Activated CD4-positive, alpha-beta T cell treated with anti-CD3 and anti-CD28 coated beads, Interleukin-2, amount 10 ng/mL, durations not matched to agents 24 days and 14 days (primary cell): ENCODE measurements at regions of chr14 and their contacts with region 1.

Region 1: DNA sequence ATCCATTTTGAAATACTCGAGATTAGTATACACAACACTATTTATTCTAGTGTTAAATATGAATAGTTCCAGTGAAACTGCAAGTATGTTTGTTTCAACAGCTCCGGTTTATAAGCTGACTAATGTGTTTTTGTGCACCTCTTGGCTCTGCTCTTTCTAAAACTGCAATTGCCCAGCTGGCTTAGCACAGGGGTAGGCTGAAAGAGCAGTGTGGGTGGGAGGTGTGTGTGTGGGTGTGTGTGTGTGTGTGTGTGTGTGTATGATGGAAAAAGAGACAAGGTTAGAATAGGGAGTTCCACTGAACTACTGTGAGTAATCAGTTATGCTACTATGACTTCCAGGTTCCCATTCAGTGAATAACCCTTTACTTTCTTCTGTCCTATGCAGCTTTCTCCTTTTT is 37.8 kb upstream of the DDHD1 start:
- DNase-seq: peak; percentile 67
- H3K4me3 Mint-ChIP-seq: peak overlapping the region; percentile 36
- H3K27ac Mint-ChIP-seq: peak overlapping the region; percentile 95
- H3K4me1 Mint-ChIP-seq: peaks cover 30% of the 10 kb centered on the region
- H3K27me3 Mint-ChIP-seq: peaks cover 4% of the 10 kb centered on the region

Region 2: DNA sequence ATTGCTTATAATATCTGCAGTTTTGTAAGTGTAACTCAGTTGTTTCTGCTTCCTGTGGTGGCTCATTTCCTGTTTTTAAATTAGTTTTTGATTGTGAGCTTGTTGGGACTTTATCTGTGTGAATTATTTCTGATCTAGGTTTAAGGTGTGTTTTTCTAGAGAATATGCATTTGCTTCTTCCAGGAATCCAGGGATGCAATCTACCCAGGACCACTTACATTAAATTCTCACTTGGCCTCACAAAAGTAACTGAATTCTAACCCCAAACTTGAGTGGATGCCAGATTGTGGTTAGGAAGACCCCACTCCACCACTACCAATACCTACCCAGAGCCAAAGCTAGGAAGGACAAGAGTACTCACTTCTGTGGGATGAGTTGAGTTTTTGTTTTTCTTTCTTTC is 449.1 kb before region 1 on chr14:
- intact Hi-C with region 1: no loop called
- DNase-seq: no peak
- H3K4me3 Mint-ChIP-seq: peak overlapping the region; percentile 75
- H3K27ac Mint-ChIP-seq: peak overlapping the region; percentile 91
- H3K4me1 Mint-ChIP-seq: peaks cover 31% of the 10 kb centered on the region
- H3K27me3 Mint-ChIP-seq: no peaks in the 10 kb centered on the region

Region 3: DNA sequence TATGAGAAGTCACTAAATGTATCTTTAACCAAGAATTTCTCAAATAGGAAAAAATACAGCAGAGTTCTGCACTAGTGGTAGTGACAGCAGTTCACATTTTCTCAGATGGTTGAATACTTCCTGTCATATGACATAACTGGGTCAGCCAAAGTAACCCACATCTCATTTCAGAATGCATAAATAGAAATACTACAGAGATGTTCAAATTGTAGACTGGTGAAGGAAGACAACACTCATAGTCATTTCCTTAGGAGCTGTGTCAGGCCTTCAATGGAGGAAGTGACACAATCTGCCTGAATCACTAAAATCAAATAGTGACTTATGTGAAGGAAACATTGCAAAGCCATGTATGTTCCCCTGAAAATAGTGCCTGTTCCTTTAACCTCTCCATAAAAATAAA is 272.5 kb before region 1 on chr14:
- intact Hi-C with region 1: loop called (anchors 2 kb)
- DNase-seq: peak; percentile 79
- H3K4me3 Mint-ChIP-seq: no peak overlapping the region
- H3K27ac Mint-ChIP-seq: no peak overlapping the region
- H3K4me1 Mint-ChIP-seq: peaks cover 12% of the 10 kb centered on the region
- H3K27me3 Mint-ChIP-seq: no peaks in the 10 kb centered on the region

Region 4: DNA sequence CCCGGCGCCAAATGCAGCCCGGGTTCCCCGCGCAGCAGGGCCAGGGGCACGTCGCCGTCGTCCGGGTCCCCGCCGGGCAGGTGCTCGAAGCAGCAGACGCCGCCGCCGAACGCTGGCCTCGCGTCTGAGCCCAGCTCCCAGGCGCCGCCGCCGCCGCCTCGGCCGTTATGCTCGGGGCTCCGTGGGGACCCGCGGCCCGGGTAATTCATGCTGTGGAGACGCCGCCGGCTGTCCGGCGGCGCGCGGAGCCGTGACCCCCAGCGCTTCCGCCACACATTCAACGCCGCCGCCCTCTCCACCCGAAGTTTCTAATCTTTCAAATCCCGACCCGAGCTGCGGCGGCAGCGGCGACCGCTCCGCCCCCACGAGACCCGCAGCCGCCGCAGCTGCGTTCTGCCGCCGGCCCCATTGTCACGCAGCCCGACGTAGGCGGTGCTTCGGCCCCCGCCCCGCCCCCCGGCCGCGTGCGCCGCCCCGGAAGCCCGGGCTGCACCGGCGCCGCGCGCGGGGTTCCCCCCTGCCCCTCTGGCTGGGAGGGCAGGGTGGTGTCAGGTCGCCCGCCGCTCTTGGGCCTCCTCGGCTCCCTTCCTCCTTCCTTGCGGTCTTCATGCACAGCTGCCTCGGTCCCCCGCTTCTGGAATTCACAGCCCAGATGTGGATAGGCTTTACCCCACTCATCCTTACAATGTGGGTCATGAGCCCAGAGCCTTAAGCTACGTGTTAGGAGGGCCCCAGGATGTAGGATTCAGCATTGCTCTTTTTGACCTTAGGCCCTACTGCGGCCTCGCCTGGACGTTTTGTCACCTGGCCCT is 37.8 kb before region 1 on chr14 and contains the start of gene DDHD1:
- intact Hi-C with region 1: loop called (anchors 1 kb)
- DNase-seq: peak; percentile 96
- H3K4me3 Mint-ChIP-seq: peak within 1 kb of the TSS; percentile 100
- H3K27ac Mint-ChIP-seq: peak within 1 kb of the TSS; percentile 99
- H3K4me1 Mint-ChIP-seq: peaks cover 44% of the 10 kb centered on the region
- H3K27me3 Mint-ChIP-seq: no peaks in the 10 kb centered on the region
- total RNA-seq, gene DDHD1: 67.9 and 70.2 TPM in 2 replicates

Region 5: GRCh38 chr14:53180268-53181221 is 10.4 kb before region 1 on chr14:
- intact Hi-C with region 1: loop called (anchors 1 kb)
- DNase-seq: peak; percentile 82
- H3K4me3 Mint-ChIP-seq: peak overlapping the region; percentile 26
- H3K27ac Mint-ChIP-seq: peak overlapping the region; percentile 74
- H3K4me1 Mint-ChIP-seq: peaks cover 36% of the 10 kb centered on the region
- H3K27me3 Mint-ChIP-seq: peaks cover 1% of the 10 kb centered on the region

Region 6: GRCh38 chr14:53217295-53217994 is 26.5 kb after region 1 on chr14:
- intact Hi-C with region 1: loop called (anchors 1 kb)
- DNase-seq: peak; percentile 93
- H3K4me3 Mint-ChIP-seq: peak overlapping the region; percentile 85
- H3K27ac Mint-ChIP-seq: peak overlapping the region; percentile 48
- H3K4me1 Mint-ChIP-seq: peaks cover 12% of the 10 kb centered on the region
- H3K27me3 Mint-ChIP-seq: no peaks in the 10 kb centered on the region

Region 7: DNA sequence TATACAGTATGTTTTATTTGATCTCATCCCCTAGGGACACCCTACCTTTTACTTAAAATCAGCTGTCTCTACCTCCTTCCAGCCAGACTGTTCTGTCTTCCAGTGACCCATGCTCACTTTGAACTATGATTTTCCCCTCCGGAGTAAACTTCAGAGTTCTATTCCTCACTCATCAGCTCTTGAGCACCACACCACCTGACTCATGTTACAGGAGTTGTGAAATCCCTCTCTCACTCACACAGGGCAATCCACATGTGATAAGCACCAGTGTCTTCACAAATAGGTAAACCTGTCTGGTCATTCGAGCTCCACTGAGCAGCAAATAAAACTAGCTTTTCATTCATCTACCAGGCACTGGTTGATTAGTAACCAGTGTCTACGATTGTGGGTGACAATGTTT is 943.0 kb after region 1 on chr14:
- intact Hi-C with region 1: no loop called
- DNase-seq: no peak
- H3K4me3 Mint-ChIP-seq: no peak overlapping the region
- H3K27ac Mint-ChIP-seq: no peak overlapping the region
- H3K4me1 Mint-ChIP-seq: no peaks in the 10 kb centered on the region
- H3K27me3 Mint-ChIP-seq: peaks cover 2% of the 10 kb centered on the region